Posterior vena cava (tissue), 2 donors: ENCODE measurements at regions of chr15 and their contacts with region 1.

Region 1: GRCh38 chr15:27179789-27180188 is 208.8 kb downstream of the GABRG3 start:
- DNase-seq: no peak

Region 2: DNA sequence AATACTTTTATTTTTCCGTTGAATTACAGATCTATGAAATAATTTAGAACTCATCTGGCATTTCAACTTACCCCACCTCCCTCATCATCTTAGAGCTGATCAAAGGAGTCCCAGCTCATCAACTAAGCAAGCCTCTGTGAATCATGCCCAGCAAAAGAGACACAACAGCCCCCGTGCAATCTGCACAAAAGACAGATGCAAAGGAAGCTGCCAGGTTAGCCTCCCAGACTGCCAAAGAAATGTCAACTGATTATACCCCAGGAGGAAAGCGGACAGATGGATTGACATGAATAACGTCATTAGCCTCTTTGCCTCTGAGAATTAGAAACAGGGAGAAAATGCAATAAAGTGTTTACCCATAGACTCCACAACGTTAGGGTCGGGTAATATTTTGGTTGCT is 481.9 kb before region 1 on chr15:
- intact Hi-C with region 1: no loop called
- DNase-seq: no peak

Region 3: DNA sequence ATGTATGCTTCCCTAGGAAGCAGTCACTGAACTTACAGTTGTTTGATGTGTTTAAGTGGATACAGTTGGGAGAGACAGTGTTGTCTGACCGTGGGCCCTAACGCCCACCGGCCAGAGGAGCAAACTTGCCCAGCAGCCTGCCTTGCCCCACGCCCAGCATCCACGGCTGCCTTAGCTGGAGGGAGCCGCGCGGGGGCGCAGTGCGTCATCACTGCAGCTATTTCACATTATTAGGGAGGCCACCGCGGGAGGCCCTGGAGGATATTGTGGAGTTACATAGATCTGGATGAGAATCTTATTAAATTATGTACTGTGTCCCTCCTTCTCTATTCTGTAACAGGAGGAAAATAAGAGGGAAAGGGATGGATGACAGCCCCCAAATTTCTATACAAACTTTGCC is 58.4 kb after region 1 on chr15:
- intact Hi-C with region 1: loop called in 1 of 2 experiments (anchors 10 kb)
- DNase-seq: no peak

Region 4: GRCh38 chr15:27250223-27250622 is 70.4 kb after region 1 on chr15:
- intact Hi-C with region 1: loop called in 1 of 2 experiments (anchors 10 kb)
- DNase-seq: no peak